Activated CD4-positive, alpha-beta memory T cell treated with anti-CD3 and anti-CD28 coated beads for 36 hours (primary cell): ENCODE measurements at regions of chr1 and their contacts with region 1.

Region 1: GRCh38 chr1:186375088-186375953 is at the starts of genes ODR4 and TPR:
- DNase-seq: peak; percentile 98
- H3K4me3 Mint-ChIP-seq: peak within 1 kb of the TSS; percentile 93
- H3K27ac Mint-ChIP-seq: peak within 1 kb of the TSS; percentile 97
- H3K4me1 Mint-ChIP-seq: peaks cover 43% of the 10 kb centered on the region
- H3K27me3 Mint-ChIP-seq: no peaks in the 10 kb centered on the region
- total RNA-seq, gene ODR4: 11.5 to 12.0 TPM
- total RNA-seq, gene TPR: 130 to 131 TPM

Region 2: DNA sequence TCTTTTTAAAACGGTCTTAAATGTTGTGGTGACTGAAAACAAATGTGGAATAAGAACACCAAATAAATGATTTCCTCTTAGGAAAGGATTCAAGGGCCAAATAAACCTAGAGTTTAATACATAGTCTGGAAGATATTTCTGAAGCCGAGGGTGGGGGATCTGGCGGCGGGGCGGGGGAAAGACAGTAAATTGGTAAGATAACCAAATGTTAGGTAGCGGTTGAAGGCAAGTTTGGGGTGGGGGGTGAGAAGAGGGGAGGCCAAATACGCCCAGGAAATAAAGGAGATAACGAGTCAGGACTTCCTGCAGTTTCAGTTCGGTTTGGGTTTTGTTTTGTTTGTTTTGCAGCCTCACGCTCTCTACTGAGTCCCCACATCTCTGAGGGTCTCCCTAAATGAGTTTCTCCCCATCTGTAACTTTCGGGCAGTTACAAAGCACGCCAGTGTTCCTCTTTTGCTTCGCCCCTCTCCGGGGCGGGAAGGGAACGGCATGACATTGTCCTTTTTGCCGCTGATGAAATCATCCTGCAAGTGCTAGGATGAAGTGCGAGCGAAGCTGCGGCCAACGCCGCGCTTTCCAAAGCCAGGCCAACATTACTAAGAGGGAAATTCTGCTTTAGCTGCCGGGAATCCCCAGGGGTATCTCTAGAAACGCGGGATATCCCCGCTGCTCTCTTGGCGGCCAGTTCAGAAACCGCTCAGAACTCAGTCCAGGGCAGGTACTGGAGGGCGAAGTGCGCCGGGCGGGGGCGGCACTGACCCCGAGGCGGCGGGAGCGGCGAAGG is 1401.9 kb before region 1 on chr1:
- CTCF ChIA-PET with region 1: no interaction called
- POLR2A ChIA-PET with region 1: no interaction called
- intact Hi-C with region 1: loop called (anchors 5 kb)
- DNase-seq: peak; percentile 86
- H3K4me3 Mint-ChIP-seq: peak overlapping the region; percentile 94
- H3K27ac Mint-ChIP-seq: peak overlapping the region; percentile 96
- H3K4me1 Mint-ChIP-seq: peaks cover 53% of the 10 kb centered on the region
- H3K27me3 Mint-ChIP-seq: peaks cover 6% of the 10 kb centered on the region

Region 3: DNA sequence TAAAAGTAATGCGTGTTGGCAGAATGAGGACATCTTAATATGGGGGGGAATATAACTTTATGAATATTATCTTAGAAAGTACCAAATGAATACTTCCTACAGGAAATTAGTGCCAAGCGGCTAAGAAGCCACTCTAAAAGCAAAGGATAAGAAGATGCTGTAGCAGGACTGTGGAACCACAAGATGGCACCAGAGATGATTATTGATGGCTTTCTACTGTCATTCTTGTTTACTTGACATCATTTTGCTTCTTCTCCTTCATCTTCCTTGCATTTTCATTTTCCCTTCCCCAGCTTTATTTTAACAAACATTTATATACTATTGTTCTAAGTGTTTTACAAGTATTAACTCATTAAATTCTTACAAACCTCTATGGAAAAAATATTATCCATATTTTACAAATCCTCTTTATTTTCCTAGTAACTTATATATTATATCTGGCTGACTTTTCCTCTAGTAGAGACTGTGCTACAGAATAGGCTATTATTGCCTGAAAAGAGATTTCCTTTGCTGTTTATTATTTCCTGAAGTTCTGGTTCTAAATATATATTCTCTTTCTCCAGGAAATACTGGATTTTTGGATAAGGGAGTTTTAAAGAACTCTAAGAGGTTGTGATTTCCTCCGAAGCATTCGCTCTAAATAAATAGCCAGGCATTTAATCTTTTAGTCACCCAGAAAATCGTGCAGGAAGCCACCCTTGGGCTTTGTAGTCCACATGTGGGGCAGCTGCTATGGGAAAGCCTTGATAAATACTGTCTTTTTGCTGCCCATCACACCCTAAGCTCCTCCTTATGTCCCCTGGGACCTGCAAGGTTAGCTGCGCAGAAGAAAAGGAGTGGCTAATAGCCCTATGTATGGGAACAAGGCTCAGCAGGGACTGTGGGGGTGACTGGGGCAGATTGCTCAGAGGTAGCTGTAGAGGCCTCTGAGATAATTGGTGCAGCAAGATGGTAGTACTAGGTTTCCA is 70.1 kb before region 1 on chr1:
- CTCF ChIA-PET with region 1: interaction called, 7 read pairs
- POLR2A ChIA-PET with region 1: interaction called, 4 read pairs
- intact Hi-C with region 1: loop called (anchors 1 kb)
- DNase-seq: no peak
- H3K4me3 Mint-ChIP-seq: no peak overlapping the region
- H3K27ac Mint-ChIP-seq: peak overlapping the region; percentile 69
- H3K4me1 Mint-ChIP-seq: peaks cover 54% of the 10 kb centered on the region
- H3K27me3 Mint-ChIP-seq: no peaks in the 10 kb centered on the region

Region 4: DNA sequence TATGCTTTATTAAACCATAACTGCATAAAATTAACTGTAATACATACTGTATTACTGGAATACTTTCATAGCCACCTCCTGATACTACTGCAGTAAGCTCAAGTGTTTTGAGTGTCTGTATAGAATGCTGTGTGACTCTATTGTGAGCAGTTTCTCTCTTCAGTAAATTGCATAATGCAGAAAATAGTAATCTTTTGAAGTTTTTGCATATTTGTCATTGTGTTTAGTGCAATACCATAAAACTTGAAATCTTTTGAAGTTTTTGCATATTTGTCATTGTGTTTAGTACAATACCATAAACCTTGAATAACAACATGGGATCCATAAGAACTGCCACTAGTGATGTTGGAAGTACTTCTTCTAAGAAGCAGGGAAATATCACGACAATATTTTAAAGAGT is 11.4 kb before region 1 on chr1:
- CTCF ChIA-PET with region 1: interaction called, 12 read pairs
- POLR2A ChIA-PET with region 1: no interaction called
- intact Hi-C with region 1: loop called (anchors 2 kb)
- DNase-seq: no peak
- H3K4me3 Mint-ChIP-seq: no peak overlapping the region
- H3K27ac Mint-ChIP-seq: no peak overlapping the region
- H3K4me1 Mint-ChIP-seq: peaks cover 3% of the 10 kb centered on the region
- H3K27me3 Mint-ChIP-seq: no peaks in the 10 kb centered on the region

Region 5: GRCh38 chr1:186420923-186421322 is 45.6 kb after region 1 on chr1:
- CTCF ChIA-PET with region 1: interaction called, 10 read pairs
- POLR2A ChIA-PET with region 1: interaction called, 3 read pairs
- intact Hi-C with region 1: no loop called
- DNase-seq: no peak
- H3K4me3 Mint-ChIP-seq: no peak overlapping the region
- H3K27ac Mint-ChIP-seq: no peak overlapping the region
- H3K4me1 Mint-ChIP-seq: peaks cover 11% of the 10 kb centered on the region
- H3K27me3 Mint-ChIP-seq: no peaks in the 10 kb centered on the region

Region 6: GRCh38 chr1:186985889-186986491 is 610.7 kb after region 1 on chr1:
- CTCF ChIA-PET with region 1: no interaction called
- POLR2A ChIA-PET with region 1: no interaction called
- intact Hi-C with region 1: loop called (anchors 2 kb)
- DNase-seq: no peak
- H3K4me3 Mint-ChIP-seq: no peak overlapping the region
- H3K27ac Mint-ChIP-seq: no peak overlapping the region
- H3K4me1 Mint-ChIP-seq: no peaks in the 10 kb centered on the region
- H3K27me3 Mint-ChIP-seq: peaks cover 3% of the 10 kb centered on the region

Region 7: DNA sequence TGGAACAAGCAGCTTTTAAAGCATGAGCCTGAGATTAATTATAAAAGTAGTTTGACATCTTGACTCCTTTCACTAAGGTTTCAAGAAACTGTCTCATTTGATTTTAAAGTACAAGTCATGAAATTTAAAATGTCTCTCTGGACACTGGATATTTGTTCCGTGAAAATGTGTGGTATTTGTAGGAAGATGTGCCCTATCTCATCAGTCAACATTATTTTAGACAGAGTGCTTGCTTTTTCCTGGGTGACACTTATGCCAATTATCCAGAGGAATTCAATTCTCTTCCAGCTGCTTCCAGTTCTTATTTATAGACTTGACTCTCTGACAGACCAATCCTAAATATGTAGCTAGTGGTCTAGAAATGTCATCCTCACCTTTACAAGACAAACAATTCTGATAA is 753.8 kb after region 1 on chr1:
- CTCF ChIA-PET with region 1: no interaction called
- POLR2A ChIA-PET with region 1: no interaction called
- intact Hi-C with region 1: no loop called
- DNase-seq: no peak
- H3K4me3 Mint-ChIP-seq: no peak overlapping the region
- H3K27ac Mint-ChIP-seq: no peak overlapping the region
- H3K4me1 Mint-ChIP-seq: no peaks in the 10 kb centered on the region
- H3K27me3 Mint-ChIP-seq: no peaks in the 10 kb centered on the region

Region 8: DNA sequence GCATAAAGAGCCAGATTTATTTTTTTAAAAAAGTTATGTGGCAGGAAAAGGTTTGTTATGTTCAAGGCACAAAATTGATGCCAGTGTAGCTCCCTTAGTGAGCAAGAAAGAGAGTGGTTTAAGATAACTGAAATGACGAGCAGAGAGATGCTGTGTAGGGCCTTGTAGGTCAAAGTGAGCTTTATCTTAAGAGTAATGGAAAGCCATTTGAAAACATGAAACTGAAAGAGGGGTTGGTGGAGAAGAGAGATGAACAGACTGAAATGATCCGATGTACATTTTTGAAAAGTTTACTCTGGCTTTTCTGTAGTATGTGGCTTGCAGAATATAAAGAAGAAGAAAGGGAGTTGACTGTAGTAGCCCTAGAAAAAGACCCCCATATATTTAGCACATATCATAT is 837.1 kb after region 1 on chr1:
- CTCF ChIA-PET with region 1: no interaction called
- POLR2A ChIA-PET with region 1: no interaction called
- intact Hi-C with region 1: no loop called
- DNase-seq: no peak
- H3K4me3 Mint-ChIP-seq: no peak overlapping the region
- H3K27ac Mint-ChIP-seq: no peak overlapping the region
- H3K4me1 Mint-ChIP-seq: no peaks in the 10 kb centered on the region
- H3K27me3 Mint-ChIP-seq: no peaks in the 10 kb centered on the region